ENCODE measurements at regions of chr1 and their contacts with region 1.

Region 1: GRCh38 chr1:99180343-99180808 is 83.9 kb upstream of the PLPPR4 start:
- DNase-seq: peak in 8 of 10 donors; percentile 18 to 93 (median 74)

Region 2: GRCh38 chr1:99239694-99240093 is 59.3 kb after region 1 on chr1:
- intact Hi-C with region 1: no loop called
- DNase-seq: no peak

Region 3: DNA sequence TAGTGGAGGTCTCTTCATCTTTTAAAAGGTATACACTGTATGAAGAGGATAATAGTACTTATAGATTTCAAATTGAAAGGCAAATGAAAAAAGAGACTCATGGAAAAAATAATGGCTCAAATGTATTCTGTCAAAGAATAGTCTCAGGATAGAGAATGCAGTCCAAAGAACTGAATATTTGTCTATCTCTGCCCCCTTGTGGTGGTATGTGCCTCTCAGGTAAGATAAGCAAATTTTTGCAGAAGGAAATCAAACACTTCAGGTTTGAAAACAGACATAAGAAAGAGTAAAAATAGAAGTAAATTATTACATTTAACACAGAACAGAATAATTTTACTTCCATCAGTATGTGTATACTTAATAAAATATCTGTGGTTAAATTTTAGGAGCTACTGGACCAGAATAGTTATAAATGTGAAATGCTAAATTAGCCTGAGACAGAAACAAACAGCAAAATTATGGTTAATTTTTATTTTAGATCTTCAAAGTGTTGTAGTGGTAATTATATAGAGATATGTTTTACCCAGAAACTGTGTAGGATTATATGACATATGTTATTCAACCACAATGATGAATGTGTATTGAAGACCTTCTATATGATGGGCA is 301.1 kb after region 1 on chr1:
- intact Hi-C with region 1: loop called (anchors 1 kb)
- DNase-seq: peak in 3 of 10 donors; percentile 21 to 23 (median 22)

Measured in posterior cingulate gyrus (tissue), 11 donors.